Left cardiac atrium (tissue), 4 donors: ENCODE measurements at regions of chr5 and their contacts with region 1.

Region 1: DNA sequence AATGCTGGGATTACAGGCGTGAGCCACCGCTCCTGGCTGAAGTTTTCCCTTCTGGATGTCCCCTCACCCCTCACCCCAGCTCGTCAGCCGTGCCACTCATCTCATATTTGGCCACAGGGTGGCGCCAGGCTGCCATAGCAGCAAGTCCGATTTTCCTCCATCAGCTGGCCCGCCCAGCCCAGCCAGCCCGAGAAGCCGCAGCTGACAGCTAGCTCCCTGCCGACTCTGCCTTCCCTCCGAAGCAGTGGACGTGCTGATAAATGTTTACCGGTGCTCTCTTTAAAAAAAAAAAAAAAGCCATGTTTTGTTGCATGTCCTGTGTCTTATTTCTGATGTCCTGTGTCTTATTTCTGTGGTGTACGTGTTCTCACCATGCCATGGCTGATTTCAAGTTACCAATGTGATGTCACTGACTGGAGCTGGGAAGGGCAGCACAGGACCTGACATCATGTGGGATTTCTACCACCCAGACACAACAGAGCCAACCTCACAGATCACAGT is 58.3 kb downstream of the PFDN1 start:
- DNase-seq: peak; percentile 94
- ATAC-seq: peak; percentile 46

Region 2: GRCh38 chr5:140351609-140352334 is 107.2 kb after region 1 on chr5:
- intact Hi-C with region 1: loop called (anchors 2 kb)
- DNase-seq: no peak
- ATAC-seq: peak; percentile 52 to 56

Region 3: GRCh38 chr5:140372971-140373487 is 128.5 kb after region 1 on chr5:
- intact Hi-C with region 1: no loop called
- DNase-seq: peak; percentile 85
- ATAC-seq: peak; percentile 82 to 90